ENCODE measurements at regions of chr16 and their contacts with region 1.

Region 1: GRCh38 chr16:14300705-14301168 is 229.6 kb downstream of the MRTFB start:
- DNase-seq: no peak
- ATAC-seq: peak; percentile 76
- H3K4me3 ChIP-seq: 0 out of 2 replicates have a peak overlapping the region, but pooled peaks have one; percentile 78
- H3K27ac ChIP-seq: no peak overlapping the region
- H3K4me1 ChIP-seq: peaks cover 5% of the 10 kb centered on the region
- H3K27me3 ChIP-seq: no peaks in the 10 kb centered on the region
- CTCF ChIP-seq: peak; percentile 78 to 96 (median 84); a peak in 5 of 6 replicates
- EP300 ChIP-seq: no peak
- POLR2A ChIP-seq: no peak
- RAD21 ChIP-seq: peak; percentile 96

Region 2: GRCh38 chr16:12688951-12689850 is 1611.5 kb before region 1 on chr16:
- CTCF ChIA-PET with region 1: no interaction called
- POLR2A ChIA-PET with region 1: no interaction called
- RAD21 ChIA-PET with region 1: no interaction called
- SMC1A ChIA-PET with region 1: no interaction called
- in situ Hi-C with region 1: no loop called
- intact Hi-C with region 1: no loop called
- DNase-seq: no peak
- ATAC-seq: peak; percentile 75
- H3K4me3 ChIP-seq: no peak overlapping the region
- H3K27ac ChIP-seq: no peak overlapping the region
- H3K4me1 ChIP-seq: no peaks in the 10 kb centered on the region
- H3K27me3 ChIP-seq: no peaks in the 10 kb centered on the region
- CTCF ChIP-seq: no peak
- EP300 ChIP-seq: no peak
- POLR2A ChIP-seq: no peak
- RAD21 ChIP-seq: no peak

Region 3: DNA sequence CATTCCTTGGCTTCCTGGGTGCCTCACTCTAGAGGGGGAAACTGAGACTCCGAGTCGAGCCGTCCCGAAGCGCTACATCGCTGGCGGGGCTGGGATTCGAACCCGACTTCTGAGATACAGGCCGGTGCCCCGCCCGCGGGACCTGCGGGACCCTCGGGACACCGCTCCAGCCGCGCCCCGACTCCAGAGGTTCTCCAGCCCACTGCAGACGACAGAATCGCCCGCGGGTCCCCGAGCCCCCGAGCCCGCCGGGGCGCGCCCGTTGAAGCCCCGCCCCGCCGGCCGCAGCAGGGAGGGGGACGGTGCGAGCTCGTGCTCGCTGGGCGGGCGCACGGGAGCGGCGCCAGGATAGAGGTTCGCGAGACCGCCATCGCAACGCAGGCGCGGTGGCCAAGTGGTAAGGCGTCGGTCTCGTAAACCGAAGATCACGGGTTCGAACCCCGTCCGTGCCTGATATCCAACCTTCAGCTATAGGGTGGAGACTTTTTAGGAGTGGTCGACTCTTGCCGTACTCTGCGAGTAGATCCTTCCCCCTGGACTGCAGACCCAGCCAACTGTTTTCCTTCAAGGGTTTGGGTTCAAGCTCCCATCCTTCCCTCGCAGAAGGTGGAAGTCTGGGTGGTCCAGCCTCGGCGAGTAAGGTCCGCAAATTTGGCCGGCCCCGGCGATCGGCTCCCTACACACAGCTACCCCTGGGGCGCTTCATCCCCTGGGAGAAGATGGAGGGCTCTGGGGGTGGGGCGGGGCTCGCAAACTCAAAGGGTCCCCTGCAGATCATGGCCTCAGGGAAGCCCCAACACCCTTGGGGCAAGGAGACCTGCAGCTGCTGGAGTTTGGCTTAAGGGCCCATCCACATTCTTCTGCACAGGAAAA is 15.0 kb before region 1 on chr16:
- CTCF ChIA-PET with region 1: interaction called, 27 read pairs
- POLR2A ChIA-PET with region 1: interaction called, 3 read pairs
- RAD21 ChIA-PET with region 1: interaction called, 17 read pairs
- SMC1A ChIA-PET with region 1: interaction called, 7 read pairs
- in situ Hi-C with region 1: no loop called
- intact Hi-C with region 1: loop called (anchors 1 kb)
- DNase-seq: peak; percentile 87
- ATAC-seq: peak; percentile 89
- H3K4me3 ChIP-seq: peak overlapping the region; percentile 89
- H3K27ac ChIP-seq: peak overlapping the region; percentile 76
- H3K4me1 ChIP-seq: peaks cover 8% of the 10 kb centered on the region
- H3K27me3 ChIP-seq: no peaks in the 10 kb centered on the region
- CTCF ChIP-seq: no peak
- EP300 ChIP-seq: peak; percentile 10 to 49; a peak in 1 of 4 replicates
- POLR2A ChIP-seq: no peak
- RAD21 ChIP-seq: no peak

Region 4: GRCh38 chr16:14405611-14406537 is 105.1 kb after region 1 on chr16:
- CTCF ChIA-PET with region 1: interaction called, 3 read pairs
- POLR2A ChIA-PET with region 1: interaction called, 3 read pairs
- RAD21 ChIA-PET with region 1: interaction called, 3 read pairs
- SMC1A ChIA-PET with region 1: interaction called, 4 read pairs
- in situ Hi-C with region 1: loop called (anchors 5 kb)
- intact Hi-C with region 1: loop called (anchors 2 kb)
- DNase-seq: peak; percentile 77
- ATAC-seq: peak; percentile 92
- H3K4me3 ChIP-seq: no peak overlapping the region
- H3K27ac ChIP-seq: peak overlapping the region; percentile 90
- H3K4me1 ChIP-seq: peaks cover 29% of the 10 kb centered on the region
- H3K27me3 ChIP-seq: no peaks in the 10 kb centered on the region
- CTCF ChIP-seq: no peak
- EP300 ChIP-seq: peak; percentile 77 to 78; a peak in 3 of 4 replicates
- POLR2A ChIP-seq: peak; percentile 53; the same call in 1 of the 2 replicates
- RAD21 ChIP-seq: no peak

Region 5: DNA sequence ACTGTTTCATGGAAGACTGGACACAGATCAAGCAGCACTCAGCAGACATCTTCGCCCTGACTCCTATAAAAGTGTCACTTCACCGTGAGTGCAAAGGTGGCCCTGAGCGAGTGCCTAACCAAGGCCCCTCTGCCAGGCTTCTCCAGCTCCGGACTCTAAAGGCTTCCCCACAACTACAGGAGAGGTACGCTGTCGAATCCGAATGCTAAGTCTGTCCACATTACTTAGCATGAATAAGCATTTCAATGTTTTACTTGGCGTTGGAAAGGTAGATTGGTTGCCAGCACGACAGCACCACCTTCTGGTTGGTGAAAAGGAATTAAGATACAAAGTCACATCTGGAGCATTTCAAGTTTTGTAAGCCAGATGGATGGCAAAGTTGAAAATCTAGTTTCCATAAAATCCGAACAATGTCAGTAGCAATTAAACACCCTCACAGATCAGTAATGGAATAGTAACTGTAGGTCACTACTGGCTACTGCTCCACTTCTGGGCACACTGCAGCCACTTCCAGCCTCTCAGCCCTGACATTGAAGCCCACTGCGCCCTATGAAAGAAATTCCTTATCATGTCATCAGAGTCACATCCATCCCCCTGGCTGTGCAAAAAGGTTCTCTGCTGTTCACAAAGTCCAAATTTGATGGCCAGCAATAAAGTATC is 228.4 kb after region 1 on chr16:
- CTCF ChIA-PET with region 1: interaction called, 85 read pairs
- POLR2A ChIA-PET with region 1: interaction called, 6 read pairs
- RAD21 ChIA-PET with region 1: interaction called, 34 read pairs
- SMC1A ChIA-PET with region 1: interaction called, 31 read pairs
- in situ Hi-C with region 1: no loop called
- intact Hi-C with region 1: loop called (anchors 1 kb)
- DNase-seq: peak; percentile 81
- ATAC-seq: peak; percentile 91
- H3K4me3 ChIP-seq: no peak overlapping the region
- H3K27ac ChIP-seq: peak overlapping the region; percentile 45
- H3K4me1 ChIP-seq: peaks cover 9% of the 10 kb centered on the region; the same call in 1 of the 2 replicates
- H3K27me3 ChIP-seq: no peaks in the 10 kb centered on the region
- CTCF ChIP-seq: peak; percentile 66 to 94 (median 70); a peak in 5 of 6 replicates
- EP300 ChIP-seq: no peak
- POLR2A ChIP-seq: no peak
- RAD21 ChIP-seq: peak; percentile 99

Region 6: GRCh38 chr16:14632692-14633569 is 332.2 kb after region 1 on chr16 and contains the start of gene BFAR:
- CTCF ChIA-PET with region 1: no interaction called
- POLR2A ChIA-PET with region 1: interaction called, 3 read pairs
- RAD21 ChIA-PET with region 1: interaction called, 4 read pairs
- SMC1A ChIA-PET with region 1: no interaction called
- in situ Hi-C with region 1: no loop called
- intact Hi-C with region 1: loop called (anchors 5 kb)
- DNase-seq: peak; percentile 92
- ATAC-seq: peak; percentile 88
- H3K4me3 ChIP-seq: peak within 1 kb of the TSS; percentile 96
- H3K27ac ChIP-seq: peak within 1 kb of the TSS; percentile 81
- H3K4me1 ChIP-seq: peaks cover 15% of the 10 kb centered on the region
- H3K27me3 ChIP-seq: no peaks in the 10 kb centered on the region
- CTCF ChIP-seq: no peak
- EP300 ChIP-seq: peak in 1 of 2 experiments; percentile 27; a peak in 1 of 4 replicates
- POLR2A ChIP-seq: peak; percentile 95
- RAD21 ChIP-seq: no peak
- polyA plus RNA-seq, gene BFAR: 35.9 to 38.2 TPM

Measured in GM12878 (cell line).